GM18951 (cell line): ENCODE measurements at regions of chr10 and their contacts with region 1.

Region 1: DNA sequence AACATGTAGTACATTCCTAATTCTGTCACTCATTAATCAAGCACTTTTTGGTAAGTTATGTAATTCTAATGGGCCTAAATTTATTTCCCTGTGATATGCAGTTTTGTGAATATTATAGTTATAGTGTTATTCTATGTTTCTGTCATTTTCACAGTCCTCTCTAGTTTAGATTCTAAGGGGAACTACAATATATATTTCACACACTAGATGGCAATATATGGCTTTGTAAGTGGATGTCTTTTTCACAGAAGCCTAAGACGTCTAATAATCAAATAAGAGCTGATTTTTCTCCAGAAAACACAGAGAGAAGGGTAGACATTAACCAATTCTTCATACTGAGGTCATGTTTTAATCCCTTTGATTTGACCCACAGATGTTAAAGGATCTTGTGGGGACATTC is 18.0 kb downstream of the RNLS start:
- POLR2A ChIP-seq: no peak

Region 2: GRCh38 chr10:88499569-88500470 is 65.3 kb before region 1 on chr10:
- in situ Hi-C with region 1: no loop called
- POLR2A ChIP-seq: no peak

Region 3: DNA sequence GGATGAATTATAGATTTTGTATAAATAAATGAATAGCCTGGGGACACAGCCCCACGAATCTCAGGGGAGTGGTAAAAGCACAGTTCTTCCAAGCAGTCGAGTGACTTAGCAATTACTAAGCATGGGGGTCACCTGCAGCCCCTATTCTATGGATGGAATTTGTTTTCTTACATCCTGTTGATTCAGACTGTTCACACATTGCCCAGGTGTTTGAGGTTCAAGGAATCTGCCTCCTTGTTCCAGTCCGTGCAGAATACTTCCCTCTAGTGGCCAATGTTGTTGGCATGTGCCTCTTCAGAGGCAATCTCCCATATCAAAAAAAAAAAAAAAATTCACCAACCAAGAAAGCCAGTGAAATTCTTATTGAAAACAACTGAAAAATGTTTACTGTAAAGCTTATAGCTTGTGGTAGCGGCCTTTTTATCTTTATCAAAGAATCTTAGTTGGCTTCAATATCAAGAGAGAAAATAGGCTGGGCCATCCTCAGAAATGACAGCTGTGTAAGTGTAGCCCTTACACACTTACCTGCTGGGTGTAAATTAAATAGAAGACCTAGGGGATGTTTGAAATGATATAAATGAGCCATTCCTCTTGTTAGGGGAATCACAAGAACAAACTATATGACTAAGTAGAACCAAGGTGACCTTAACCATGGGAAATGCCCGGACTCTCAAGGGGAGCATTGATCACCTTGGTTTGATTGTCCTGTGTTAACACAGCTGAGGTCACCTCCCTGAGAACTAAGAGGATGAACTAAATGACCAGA is 245.3 kb after region 1 on chr10:
- in situ Hi-C with region 1: loop called (anchors 5 kb)
- POLR2A ChIP-seq: no peak